KBM-7 (cell line): ENCODE measurements at regions of chr7 and their contacts with region 1.

Region 1: DNA sequence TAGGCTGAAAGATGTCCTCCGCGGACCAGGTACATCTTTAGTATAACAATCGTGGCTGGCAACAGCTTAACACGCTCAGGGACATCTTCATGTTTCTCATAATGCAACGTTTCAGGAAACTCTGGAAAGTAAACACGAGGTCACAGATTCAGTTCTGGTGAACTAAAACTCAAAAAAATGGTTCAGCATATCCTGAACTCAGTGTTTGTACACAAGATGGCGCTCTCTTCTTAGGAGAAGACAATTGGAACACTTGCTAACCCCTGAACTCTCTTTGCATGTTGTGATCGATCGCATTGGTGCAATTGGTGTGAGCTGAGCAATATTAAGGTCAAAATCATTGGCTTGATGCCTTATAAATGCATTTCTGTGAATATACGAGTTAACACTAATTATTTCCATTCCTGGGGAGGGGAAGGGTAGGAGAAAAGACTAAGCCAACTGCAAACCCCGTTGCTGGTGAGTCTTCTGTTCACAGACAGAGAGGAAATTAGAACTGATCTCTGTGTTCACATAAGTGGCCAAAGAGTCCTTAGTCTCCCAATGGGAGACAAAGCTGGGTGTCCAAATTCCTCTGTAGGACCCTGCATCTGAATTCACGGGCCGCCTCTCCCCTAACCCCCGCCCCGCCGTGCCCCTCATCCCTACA is 52.6 kb upstream of the FAM180A start:
- DNase-seq: peak; percentile 75

Region 2: GRCh38 chr7:135710417-135711138 is 90.6 kb before region 1 on chr7:
- in situ Hi-C with region 1: no loop called
- DNase-seq: no peak

Region 3: GRCh38 chr7:136009488-136010079 is 208.4 kb after region 1 on chr7:
- in situ Hi-C with region 1: loop called (anchors 25 kb)
- DNase-seq: peak; percentile 50